ENCODE measurements at regions of chr19 and their contacts with region 1.

Region 1: DNA sequence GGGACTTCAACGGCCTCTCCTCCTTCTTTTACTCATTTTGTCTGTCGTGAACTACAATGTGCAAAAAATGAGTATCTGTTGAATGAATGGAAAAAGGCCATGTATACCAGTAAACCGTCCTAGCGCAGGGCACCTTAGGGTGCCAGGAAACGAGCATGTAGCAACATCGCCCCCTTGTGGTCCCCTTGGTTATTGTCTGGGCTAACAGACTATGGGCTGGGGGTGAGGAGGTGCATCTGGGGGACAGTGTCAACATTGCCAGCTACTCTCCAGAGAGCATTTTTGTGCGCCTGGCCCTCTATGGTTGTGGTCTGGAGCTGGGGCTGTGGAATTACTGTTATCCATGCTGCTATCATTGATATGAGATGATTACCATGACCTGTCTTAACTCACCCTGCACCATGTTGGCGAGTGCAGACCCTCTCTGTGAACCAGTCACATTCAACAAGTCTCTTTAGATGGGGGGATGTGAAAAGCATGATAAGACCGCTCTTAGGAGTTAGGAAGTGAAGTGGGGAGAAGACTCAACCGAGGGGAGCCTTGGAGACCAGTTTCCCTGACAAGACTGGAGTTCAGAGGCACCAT is 22.8 kb upstream of the SIGLEC11 start:
- DNase-seq: peak in 9 of 10 donors; percentile 45 to 74 (median 58)
- H3K4me3 ChIP-seq: no peak overlapping the region
- H3K27ac ChIP-seq: no peak overlapping the region
- H3K27me3 ChIP-seq: no peaks in the 10 kb centered on the region
- CTCF ChIP-seq: peak; percentile 57 to 88 (median 80)

Region 2: DNA sequence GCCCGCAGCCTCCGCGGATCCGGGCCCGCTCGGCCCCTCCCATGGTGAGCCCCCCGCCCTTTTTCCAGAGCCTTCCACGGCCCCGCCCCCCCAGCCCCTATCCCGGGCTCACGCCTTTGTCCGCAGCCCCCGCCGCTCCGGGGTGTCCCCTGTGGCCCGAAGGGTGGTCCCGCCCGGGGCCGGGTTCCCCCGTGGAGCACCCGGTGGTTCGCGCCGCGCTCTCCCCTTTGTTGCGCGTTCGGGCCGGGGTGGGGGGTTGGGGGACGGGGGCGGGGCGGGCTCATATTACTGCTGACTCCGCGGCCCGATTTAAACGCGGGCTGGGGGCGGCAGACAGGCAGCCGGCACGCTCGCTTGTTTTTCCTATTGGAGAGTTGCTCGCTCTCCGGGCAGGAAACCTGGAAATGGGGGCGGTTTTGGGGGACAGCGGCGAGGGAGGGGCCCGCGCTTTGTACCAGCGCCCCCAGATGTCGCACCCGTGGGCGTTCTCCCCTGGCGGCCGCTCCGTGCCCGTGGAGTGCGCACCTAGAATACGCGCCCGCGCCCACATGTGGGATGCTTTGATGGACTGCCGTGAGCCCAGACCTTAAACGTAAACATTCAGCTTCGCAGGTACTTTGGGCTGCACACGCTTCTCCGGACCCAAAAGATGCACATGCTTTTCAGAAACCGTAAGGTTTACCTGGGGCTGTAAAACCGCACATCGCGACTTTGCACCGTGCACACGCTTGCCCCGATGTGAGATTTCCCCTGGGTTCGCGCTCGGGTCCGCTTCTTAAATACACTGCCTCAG is 132.1 kb before region 1 on chr19:
- intact Hi-C with region 1: no loop called
- DNase-seq: peak in 1 of 10 donors; percentile 54
- H3K4me3 ChIP-seq: peak overlapping the region; percentile 68 to 98 (median 91)
- H3K27ac ChIP-seq: peak overlapping the region in 58 of 59 donors; percentile 25 to 100 (median 99)
- H3K27me3 ChIP-seq: no peaks in the 10 kb centered on the region
- CTCF ChIP-seq: no peak

Region 3: GRCh38 chr19:49937750-49938381 is 45.9 kb before region 1 on chr19:
- intact Hi-C with region 1: loop called (anchors 1 to 2 kb)
- DNase-seq: peak in 9 of 10 donors; percentile 65 to 83 (median 69)
- H3K4me3 ChIP-seq: peak overlapping the region in 54 of 59 donors; percentile 6 to 61 (median 38)
- H3K27ac ChIP-seq: no peak overlapping the region
- H3K27me3 ChIP-seq: peaks cover 0 to 11% (median 0%) of the 10 kb centered on the region in 45 donors
- CTCF ChIP-seq: peak; percentile 89 to 99 (median 97)

Region 4: DNA sequence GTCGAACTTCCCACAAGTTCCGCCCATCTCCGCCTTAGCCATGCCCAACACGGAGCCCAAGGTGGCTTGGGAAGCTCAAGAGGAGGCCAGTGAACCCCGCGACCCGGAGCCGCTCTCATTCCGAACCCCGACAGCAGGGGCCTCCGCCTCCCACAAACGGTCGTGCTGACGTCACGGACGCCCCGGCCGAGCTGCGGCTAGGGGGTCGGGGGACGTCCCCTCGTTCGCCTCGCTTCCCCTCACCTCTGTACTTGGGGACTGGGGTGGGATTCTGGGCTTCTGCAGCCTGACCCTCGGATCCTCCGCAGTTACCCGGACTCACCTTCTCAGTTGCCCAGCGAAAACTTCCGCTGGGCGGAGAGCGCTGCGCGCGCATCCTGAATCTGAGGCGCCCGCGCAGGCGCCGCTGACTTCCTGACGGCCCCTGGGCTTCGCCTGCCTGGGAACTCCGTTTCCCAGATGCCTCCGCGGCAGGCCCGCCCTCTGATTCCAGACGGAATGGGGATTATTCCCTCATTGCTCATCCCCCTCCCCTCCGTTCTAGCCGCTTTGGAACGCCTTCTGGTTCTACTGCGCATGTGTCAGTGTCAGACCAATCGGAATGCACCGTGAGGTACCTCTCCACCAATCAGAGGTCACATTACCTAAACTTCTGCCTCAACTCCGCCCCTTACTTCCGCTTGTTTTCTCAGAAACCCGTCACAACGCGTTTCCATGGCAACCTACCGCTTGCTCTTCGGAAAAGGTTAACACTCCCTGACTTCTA is 41.5 kb after region 1 on chr19 and contains the start of gene VRK3:
- intact Hi-C with region 1: no loop called
- DNase-seq: peak; percentile 99 to 100 (median 99)
- H3K4me3 ChIP-seq: peak within 1 kb of the TSS; percentile 61 to 100 (median 96)
- H3K27ac ChIP-seq: peak within 1 kb of the TSS; percentile 24 to 97 (median 88)
- H3K27me3 ChIP-seq: no peaks in the 10 kb centered on the region
- CTCF ChIP-seq: peak in 37 of 56 donors; percentile 4 to 47 (median 25)
- total RNA-seq, gene VRK3: 38.8 to 67.5 (median 53.3) TPM

Measured in dorsolateral prefrontal cortex (tissue), 120 donors.